Heart right ventricle (tissue), 16 donors: ENCODE measurements at regions of chr13 and their contacts with region 1.

Region 1: GRCh38 chr13:98007001-98007400 is 53.5 kb downstream of the IPO5 start:
- DNase-seq: no peak
- ATAC-seq: no peak
- H3K4me3 ChIP-seq: no peak overlapping the region
- H3K27ac ChIP-seq: no peak overlapping the region
- H3K4me1 ChIP-seq: no peaks in the 10 kb centered on the region
- H3K27me3 ChIP-seq: no peaks in the 10 kb centered on the region
- CTCF ChIP-seq: no peak

Region 2: DNA sequence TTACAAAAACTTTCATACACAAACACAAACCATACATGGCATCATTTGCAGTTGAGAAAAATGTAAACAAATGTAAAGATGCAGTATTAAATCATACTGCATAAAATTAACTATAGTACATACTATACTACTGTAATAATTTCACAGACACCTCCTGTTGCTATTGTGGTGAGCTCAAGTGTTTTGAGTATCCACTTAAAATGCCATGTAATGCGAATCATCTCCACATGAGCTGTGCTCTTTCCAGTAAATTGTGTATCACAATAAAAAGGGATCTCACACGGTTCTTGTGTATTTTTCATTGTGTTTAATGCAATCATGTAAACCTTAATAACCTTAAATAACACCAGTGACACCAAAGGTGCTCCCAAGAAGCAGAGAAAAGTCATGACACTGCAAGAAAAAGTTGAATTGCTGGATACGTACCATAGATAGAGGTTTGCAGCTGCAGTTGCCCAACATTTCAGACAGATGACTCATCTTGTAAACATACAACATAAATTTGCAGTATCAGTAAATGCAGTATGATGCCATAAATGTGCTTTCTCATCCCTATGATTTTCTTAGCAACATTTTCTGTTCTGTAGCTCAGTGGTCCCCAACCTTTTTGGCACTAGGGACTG is 406.4 kb before region 1 on chr13:
- intact Hi-C with region 1: loop called in 1 of 10 experiments (anchors 5 kb)
- DNase-seq: no peak
- ATAC-seq: no peak
- H3K4me3 ChIP-seq: no peak overlapping the region
- H3K27ac ChIP-seq: no peak overlapping the region
- H3K4me1 ChIP-seq: peaks cover 0 to 6% (median 0%) of the 10 kb centered on the region in 9 donors
- H3K27me3 ChIP-seq: no peaks in the 10 kb centered on the region
- CTCF ChIP-seq: no peak